ENCODE measurements at regions of chr4 and their contacts with region 1.

Region 1: GRCh38 chr4:107736924-107737448 is 17.0 kb upstream of the PAPSS1 start:
- DNase-seq: peak; percentile 51 to 57 (median 53)
- H3K4me3 ChIP-seq: no peak overlapping the region
- H3K27ac ChIP-seq: no peak overlapping the region
- H3K4me1 ChIP-seq: peaks cover 5 to 35% (median 13%) of the 10 kb centered on the region in 4 experiments
- H3K27me3 ChIP-seq: no peaks in the 10 kb centered on the region

Region 2: GRCh38 chr4:107600436-107600835 is 136.6 kb before region 1 on chr4:
- CTCF ChIA-PET with region 1: no interaction called
- POLR2A ChIA-PET with region 1: no interaction called
- DNase-seq: no peak
- H3K4me3 ChIP-seq: no peak overlapping the region
- H3K27ac ChIP-seq: no peak overlapping the region
- H3K4me1 ChIP-seq: no peaks in the 10 kb centered on the region
- H3K27me3 ChIP-seq: no peaks in the 10 kb centered on the region

Region 3: GRCh38 chr4:107666134-107666533 is 70.9 kb before region 1 on chr4:
- CTCF ChIA-PET with region 1: interaction called, 16 read pairs
- POLR2A ChIA-PET with region 1: no interaction called
- DNase-seq: peak; percentile 31 to 66 (median 62)
- H3K4me3 ChIP-seq: no peak overlapping the region
- H3K27ac ChIP-seq: no peak overlapping the region
- H3K4me1 ChIP-seq: peaks cover 0 to 7% (median 4%) of the 10 kb centered on the region in 4 experiments
- H3K27me3 ChIP-seq: no peaks in the 10 kb centered on the region

Region 4: GRCh38 chr4:107719922-107720722 is 16.9 kb before region 1 on chr4 and contains the start of gene PAPSS1:
- CTCF ChIA-PET with region 1: interaction called, 66 read pairs
- POLR2A ChIA-PET with region 1: interaction called, 6 read pairs
- DNase-seq: peak; percentile 97 to 98 (median 98)
- H3K4me3 ChIP-seq: peak within 1 kb of the TSS; percentile 67 to 100 (median 95)
- H3K27ac ChIP-seq: peak within 1 kb of the TSS; percentile 38 to 86
- H3K4me1 ChIP-seq: peaks cover 9 to 27% (median 20%) of the 10 kb centered on the region in 4 experiments
- H3K27me3 ChIP-seq: no peaks in the 10 kb centered on the region

Region 5: DNA sequence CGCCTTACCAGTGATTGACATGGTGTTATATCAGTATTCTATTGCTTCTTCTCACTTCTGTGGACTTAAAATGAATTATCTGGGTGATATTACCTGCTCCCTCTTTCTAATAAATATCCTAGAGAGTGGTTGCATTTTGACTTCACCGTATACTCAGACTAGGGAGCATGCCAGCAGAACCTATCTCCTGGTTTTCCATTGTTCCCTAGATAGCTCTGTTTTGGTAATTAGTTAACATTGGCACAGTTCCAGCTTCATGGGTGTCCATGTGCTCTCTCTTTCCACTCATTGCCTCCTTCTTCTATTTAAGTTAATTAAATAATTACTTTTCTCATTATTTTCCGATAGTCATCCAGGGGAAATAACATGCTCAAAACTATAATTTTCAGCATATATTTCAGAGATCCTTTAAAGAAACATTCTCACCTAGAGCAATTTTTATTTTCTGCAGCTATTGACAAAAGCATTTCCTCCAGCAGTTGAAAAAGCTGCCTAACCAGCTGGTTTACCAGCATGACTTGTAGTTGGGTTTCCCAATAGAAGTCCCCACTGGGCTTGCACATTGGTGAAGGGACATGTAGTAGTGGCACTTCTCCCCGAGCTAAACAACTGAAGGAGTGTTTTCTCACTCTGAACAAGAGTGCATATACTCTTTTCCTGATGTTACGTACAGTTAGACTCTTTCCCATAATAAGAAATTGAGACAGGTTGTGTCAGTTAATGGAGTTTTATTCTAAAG is 10.9 kb after region 1 on chr4:
- CTCF ChIA-PET with region 1: interaction called, 27 read pairs
- POLR2A ChIA-PET with region 1: no interaction called
- DNase-seq: no peak
- H3K4me3 ChIP-seq: no peak overlapping the region
- H3K27ac ChIP-seq: no peak overlapping the region
- H3K4me1 ChIP-seq: no peaks in the 10 kb centered on the region
- H3K27me3 ChIP-seq: peaks cover 0 to 2% (median 0%) of the 10 kb centered on the region in 5 experiments

Region 6: GRCh38 chr4:107791902-107792301 is 54.9 kb after region 1 on chr4:
- CTCF ChIA-PET with region 1: no interaction called
- POLR2A ChIA-PET with region 1: no interaction called
- DNase-seq: no peak
- H3K4me3 ChIP-seq: no peak overlapping the region
- H3K27ac ChIP-seq: no peak overlapping the region
- H3K4me1 ChIP-seq: no peaks in the 10 kb centered on the region
- H3K27me3 ChIP-seq: no peaks in the 10 kb centered on the region